Sciatic nerve (tissue), 2 donors: ENCODE measurements at regions of chr16 and their contacts with region 1.

Region 1: GRCh38 chr16:89217388-89218191 is at the start of gene ZNF778:
- DNase-seq: peak; percentile 89
- ATAC-seq: peak; percentile 96
- total RNA-seq, gene ZNF778: 9.8 TPM

Region 2: DNA sequence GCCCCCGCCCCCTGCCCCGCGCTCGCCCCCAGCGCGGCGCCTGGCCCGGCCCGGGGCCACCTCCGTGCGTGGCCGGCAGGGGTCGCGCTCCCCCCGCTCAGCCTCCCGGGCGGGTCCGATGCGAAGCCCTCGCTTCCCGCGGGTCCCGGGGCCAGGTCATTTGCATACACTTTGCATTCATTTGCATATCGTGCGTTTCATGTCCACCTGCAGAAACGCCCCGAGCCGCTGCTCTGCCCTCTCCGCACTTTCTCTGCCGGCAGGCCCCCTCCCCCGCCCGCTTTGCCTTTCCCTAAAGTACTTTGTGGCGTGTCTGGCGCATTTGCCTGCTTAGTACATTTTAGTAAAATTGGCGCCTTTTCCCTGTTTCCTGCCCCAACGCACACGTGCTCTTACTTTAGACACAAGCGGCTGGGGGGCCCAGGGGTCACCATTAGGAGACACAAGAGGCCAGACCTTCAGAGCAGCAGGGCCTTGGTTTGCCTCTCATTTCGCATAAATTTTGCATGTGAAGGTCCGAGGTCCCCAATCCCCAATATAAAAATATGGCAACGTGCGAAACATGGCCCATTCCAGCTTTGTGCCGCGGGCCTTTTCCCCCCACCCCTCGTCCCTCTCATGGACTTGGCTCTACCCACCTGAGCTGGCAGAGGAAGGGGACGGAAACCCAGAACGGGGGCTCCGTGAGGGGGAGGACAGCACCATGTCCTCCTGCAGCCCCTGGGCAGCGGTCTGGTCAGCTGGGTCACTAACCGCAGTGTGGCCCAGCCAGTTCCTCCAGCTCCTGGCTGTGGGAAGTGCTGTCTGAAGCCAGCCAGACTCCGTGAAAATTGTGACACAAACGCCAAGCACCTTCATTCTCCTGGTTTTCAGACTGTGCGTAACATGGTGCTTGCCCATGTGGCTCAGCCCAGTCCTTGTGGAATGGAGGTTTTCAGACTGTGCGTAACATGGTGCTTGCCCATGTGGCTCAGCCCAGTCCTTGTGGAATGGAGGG is 275.4 kb before region 1 on chr16:
- intact Hi-C with region 1: loop called (anchors 5 kb)
- DNase-seq: no peak
- ATAC-seq: no peak

Region 3: GRCh38 chr16:89241187-89242007 is 23.8 kb after region 1 on chr16:
- intact Hi-C with region 1: no loop called
- DNase-seq: peak; percentile 85
- ATAC-seq: peak; percentile 89

Region 4: DNA sequence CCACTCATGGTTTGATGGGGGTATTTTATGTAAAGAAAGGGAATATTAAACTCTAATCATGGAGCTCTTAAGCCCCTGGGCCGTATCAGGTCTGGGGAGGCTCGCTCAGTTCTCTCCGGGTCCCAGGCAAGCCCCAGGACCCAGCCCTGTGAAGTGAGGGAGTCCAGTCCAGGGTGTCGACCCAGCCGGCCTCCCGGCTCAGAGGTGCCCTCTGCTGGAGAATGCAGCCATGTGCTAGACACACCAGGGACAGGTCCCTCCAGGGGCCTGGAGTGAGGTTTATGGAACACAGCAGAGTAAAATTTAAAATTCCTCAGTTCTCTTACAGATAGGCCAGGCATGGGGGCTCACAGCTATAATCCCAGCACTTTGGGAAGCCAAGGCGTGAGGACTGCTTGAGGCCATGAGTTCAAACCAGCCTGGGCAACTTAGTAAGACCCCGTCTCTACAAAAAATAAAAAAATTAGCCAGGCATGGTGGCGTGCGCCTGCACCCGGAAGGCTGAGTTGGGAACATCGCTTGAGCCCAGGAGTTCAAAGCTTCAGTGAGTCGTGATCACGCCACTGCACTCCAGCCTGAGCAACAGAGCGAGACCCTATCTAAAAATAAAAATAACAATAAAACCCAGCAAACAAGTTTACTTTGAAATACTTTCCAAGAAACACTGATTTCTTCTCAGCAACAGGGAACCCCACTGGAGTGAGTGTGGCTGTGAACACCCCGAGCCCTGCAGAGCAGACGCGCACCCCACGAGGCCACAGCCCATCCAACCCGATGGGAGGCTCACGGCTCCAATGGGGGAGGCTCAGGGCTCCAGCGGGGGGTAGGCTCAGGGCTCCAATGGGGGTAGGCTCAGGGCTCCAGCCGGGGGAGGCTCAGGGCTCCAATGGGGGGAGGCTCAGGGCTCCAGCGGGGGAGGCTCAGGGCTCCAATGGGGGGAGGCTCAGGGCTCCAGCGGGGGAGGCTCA is 72.1 kb after region 1 on chr16:
- intact Hi-C with region 1: no loop called
- DNase-seq: peak; percentile 85
- ATAC-seq: peak; percentile 75